ENCODE measurements at regions of chrX and their contacts with region 1.

Region 1: GRCh38 chrX:46903458-46904242 is 8.6 kb upstream of the JADE3 start:
- DNase-seq: peak; percentile 65
- H3K4me3 ChIP-seq: peak overlapping the region in 2 of 3 experiments; percentile 50 to 56
- H3K27ac ChIP-seq: no peak overlapping the region
- H3K4me1 ChIP-seq: no peaks in the 10 kb centered on the region
- H3K27me3 ChIP-seq: no peaks in the 10 kb centered on the region
- CTCF ChIP-seq: peak; percentile 22 to 76

Region 2: GRCh38 chrX:46803140-46803539 is 100.5 kb before region 1 on chrX:
- CTCF ChIA-PET with region 1: no interaction called
- dilution Hi-C with region 1: no loop called
- in situ Hi-C with region 1: no loop called
- intact Hi-C with region 1: loop called (anchors 5 kb)
- DNase-seq: no peak
- H3K4me3 ChIP-seq: no peak overlapping the region
- H3K27ac ChIP-seq: no peak overlapping the region
- H3K4me1 ChIP-seq: no peaks in the 10 kb centered on the region
- H3K27me3 ChIP-seq: no peaks in the 10 kb centered on the region
- CTCF ChIP-seq: peak; percentile 13 to 44

Region 3: DNA sequence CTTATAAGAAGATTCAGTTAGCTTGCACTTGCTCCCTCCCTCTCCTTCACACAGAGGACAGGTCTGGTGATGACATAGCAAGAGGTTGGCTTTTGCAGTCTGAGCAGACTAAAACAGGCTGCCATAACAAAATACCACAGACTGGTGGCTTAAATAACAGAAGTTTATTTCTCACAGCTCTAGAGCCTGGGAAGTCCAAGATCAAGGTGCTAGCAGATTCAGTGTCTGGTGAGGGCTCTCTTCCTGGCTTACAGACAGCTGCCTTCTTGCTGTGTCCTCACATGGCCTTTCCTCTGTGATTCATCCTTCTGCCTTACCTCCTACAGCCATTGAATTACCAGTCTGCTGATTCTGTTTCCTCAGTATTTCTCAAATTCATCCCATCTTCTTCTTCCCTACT is 53.7 kb before region 1 on chrX:
- CTCF ChIA-PET with region 1: interaction called, 17 read pairs
- dilution Hi-C with region 1: no loop called
- in situ Hi-C with region 1: no loop called
- intact Hi-C with region 1: no loop called
- DNase-seq: peak; percentile 29
- H3K4me3 ChIP-seq: no peak overlapping the region
- H3K27ac ChIP-seq: no peak overlapping the region
- H3K4me1 ChIP-seq: no peaks in the 10 kb centered on the region
- H3K27me3 ChIP-seq: peaks cover 2% of the 10 kb centered on the region
- CTCF ChIP-seq: no peak

Region 4: DNA sequence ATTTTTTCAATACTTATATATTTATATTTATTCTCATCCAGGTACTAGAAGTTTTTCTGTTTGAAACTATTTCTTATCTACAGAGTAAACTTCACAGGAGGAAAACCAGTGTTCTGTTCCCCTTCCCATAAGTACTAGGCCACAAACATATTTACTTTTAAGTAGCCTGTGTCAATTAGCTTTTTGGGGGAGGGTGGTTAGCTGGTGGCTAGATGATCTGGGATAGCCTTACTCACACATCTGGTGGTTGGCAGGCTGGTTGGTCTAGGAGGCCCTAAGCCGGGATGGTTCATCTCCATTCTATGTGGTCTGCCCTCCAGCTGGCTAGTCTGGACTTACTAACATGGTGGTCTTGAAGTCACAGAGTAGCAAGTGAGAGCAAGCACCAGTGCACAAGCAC is 14.8 kb after region 1 on chrX:
- CTCF ChIA-PET with region 1: no interaction called
- dilution Hi-C with region 1: no loop called
- in situ Hi-C with region 1: no loop called
- intact Hi-C with region 1: no loop called
- DNase-seq: no peak
- H3K4me3 ChIP-seq: no peak overlapping the region
- H3K27ac ChIP-seq: no peak overlapping the region
- H3K4me1 ChIP-seq: no peaks in the 10 kb centered on the region
- H3K27me3 ChIP-seq: no peaks in the 10 kb centered on the region
- CTCF ChIP-seq: no peak

Region 5: DNA sequence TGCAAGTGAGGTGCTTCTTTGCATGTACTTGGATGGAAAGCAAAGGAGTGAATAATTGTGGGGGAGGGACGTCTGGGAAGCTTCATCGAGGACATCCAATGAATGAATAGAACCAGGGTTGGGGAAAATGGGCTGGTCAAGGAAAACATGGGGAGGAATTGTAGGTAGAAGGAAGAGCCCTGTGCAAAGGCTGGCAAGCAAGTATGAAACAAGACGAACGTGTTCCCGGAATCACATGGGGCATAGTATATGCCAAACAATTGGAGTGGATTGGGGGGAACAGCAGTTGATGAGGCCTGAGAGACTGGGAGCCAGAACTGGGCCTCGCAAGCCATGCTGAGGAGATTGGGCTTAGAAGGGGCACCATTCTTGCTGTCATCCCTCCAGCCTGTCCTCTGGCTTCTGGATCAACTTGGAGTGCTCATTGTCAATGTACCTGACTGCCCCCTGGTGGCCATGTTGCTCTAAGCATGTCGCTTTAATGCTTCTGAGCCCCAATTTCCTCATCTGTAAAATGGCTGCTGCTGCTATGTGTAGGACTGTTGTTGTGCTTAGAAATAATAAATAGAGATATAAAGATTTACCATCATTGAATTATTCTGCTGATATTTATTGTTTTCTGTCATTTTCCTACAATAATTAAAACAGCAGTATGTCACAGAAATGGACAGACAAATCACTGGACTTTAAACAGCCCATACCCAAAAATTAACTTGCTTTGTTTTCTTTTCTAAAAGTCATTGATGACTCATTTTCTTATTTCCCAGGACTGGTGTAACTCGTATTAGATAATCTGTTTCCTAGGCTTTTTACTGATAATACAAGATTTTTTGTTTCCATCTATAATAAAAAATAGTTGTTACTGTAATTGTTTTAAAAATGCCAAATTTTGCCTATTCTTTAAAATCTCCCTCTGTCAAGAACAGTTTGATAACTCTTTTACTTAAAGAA is 75.0 kb after region 1 on chrX:
- CTCF ChIA-PET with region 1: no interaction called
- dilution Hi-C with region 1: no loop called
- in situ Hi-C with region 1: no loop called
- intact Hi-C with region 1: loop called (anchors 1 kb)
- DNase-seq: peak; percentile 62
- H3K4me3 ChIP-seq: no peak overlapping the region
- H3K27ac ChIP-seq: peak overlapping the region; percentile 30
- H3K4me1 ChIP-seq: peaks cover 4% of the 10 kb centered on the region
- H3K27me3 ChIP-seq: peaks cover 4% of the 10 kb centered on the region
- CTCF ChIP-seq: peak; percentile 71 to 86

Region 6: GRCh38 chrX:47093248-47093647 is 189.6 kb after region 1 on chrX:
- CTCF ChIA-PET with region 1: no interaction called
- dilution Hi-C with region 1: no loop called
- in situ Hi-C with region 1: no loop called
- intact Hi-C with region 1: loop called (anchors 1 kb)
- DNase-seq: peak; percentile 12
- H3K4me3 ChIP-seq: no peak overlapping the region
- H3K27ac ChIP-seq: no peak overlapping the region
- H3K4me1 ChIP-seq: no peaks in the 10 kb centered on the region
- H3K27me3 ChIP-seq: no peaks in the 10 kb centered on the region
- CTCF ChIP-seq: peak; percentile 38 to 53